ENCODE measurements at regions of chr9 and their contacts with region 1.

Region 1: DNA sequence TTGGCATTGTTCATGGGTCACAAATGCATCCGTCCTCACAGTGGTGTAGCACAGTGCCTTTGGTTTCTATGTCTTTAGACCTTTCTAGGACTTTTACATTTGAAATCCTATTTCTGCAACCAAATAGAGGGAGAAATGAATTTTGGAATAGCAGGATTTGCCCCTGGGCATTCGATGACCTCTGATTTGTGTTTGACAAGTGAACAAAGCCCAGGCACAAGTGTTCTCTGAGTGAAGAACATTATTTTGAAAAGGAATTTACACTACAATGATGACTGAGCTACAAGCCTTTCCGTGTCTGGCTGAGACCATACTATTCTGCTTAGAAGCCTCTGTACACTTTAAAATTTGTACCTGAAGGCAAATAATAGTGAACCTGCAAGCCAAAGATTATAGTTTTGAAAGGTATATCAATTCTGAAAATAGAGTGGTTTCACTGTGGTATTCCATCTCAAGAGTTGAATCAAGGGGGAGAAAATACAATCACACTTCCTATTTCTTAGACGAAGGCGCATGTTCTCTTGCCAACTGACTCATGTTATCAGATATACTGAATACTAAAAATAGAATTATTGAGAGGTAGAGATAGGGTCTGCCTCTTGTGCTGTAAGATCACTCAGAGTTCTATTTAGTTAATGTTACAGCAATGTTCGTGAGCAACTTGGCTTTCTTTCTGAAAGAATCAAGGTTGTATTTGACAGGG is 297.6 kb downstream of the KDM4C start:
- DNase-seq: no peak
- H3K4me3 Mint-ChIP-seq: no peak overlapping the region
- H3K27ac Mint-ChIP-seq: no peak overlapping the region
- H3K4me1 Mint-ChIP-seq: no peaks in the 10 kb centered on the region
- H3K27me3 Mint-ChIP-seq: no peaks in the 10 kb centered on the region

Region 2: GRCh38 chr9:6827439-6827838 is 227.9 kb before region 1 on chr9:
- intact Hi-C with region 1: loop called (anchors 1 kb)
- DNase-seq: peak; percentile 27
- H3K4me3 Mint-ChIP-seq: no peak overlapping the region
- H3K27ac Mint-ChIP-seq: peak overlapping the region; percentile 57
- H3K4me1 Mint-ChIP-seq: peaks cover 10% of the 10 kb centered on the region
- H3K27me3 Mint-ChIP-seq: no peaks in the 10 kb centered on the region

Region 3: DNA sequence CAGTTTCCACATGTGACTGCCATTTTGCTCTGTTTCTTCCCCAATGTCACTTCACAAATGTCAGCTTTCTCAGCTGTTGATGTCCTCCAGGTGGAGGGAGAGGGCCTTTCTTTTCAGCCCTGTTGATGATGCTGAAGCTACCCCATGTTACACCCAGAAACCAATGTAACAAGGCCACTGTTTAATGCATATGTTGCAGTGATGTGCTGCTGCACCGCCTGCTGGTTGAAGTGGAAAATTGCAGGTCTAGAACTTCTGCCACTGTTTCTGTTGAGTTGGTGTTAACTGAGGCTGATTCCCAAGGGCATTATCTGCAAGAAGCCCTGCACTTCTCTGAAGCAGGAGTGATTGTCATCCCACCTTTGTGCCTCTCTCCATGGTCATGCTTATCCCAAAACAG is 130.8 kb after region 1 on chr9:
- intact Hi-C with region 1: loop called (anchors 1 kb)
- DNase-seq: no peak
- H3K4me3 Mint-ChIP-seq: no peak overlapping the region
- H3K27ac Mint-ChIP-seq: no peak overlapping the region
- H3K4me1 Mint-ChIP-seq: no peaks in the 10 kb centered on the region
- H3K27me3 Mint-ChIP-seq: no peaks in the 10 kb centered on the region

Region 4: DNA sequence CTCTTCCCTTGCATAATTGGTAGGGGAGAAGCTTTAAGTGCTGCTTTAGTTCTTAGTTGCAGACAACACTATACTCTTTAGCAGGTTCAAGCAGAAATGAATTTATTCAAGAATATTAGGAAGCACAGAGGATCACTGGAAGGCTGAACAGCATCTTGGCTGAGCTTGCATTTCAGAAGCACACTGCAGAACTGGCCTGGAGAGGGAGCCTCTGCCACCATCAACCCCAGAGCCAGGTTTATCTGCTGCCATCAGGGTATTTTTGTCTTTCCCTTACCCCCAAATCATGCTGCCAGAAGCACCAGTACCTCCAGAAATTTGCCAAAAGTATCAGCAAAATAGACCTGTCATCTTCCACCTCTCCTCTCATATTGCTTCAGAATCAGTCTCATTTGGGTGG is 303.5 kb after region 1 on chr9:
- intact Hi-C with region 1: loop called (anchors 10 kb)
- DNase-seq: no peak
- H3K4me3 Mint-ChIP-seq: no peak overlapping the region
- H3K27ac Mint-ChIP-seq: no peak overlapping the region
- H3K4me1 Mint-ChIP-seq: no peaks in the 10 kb centered on the region
- H3K27me3 Mint-ChIP-seq: peaks cover 5% of the 10 kb centered on the region

Measured in activated T-helper 1 cell treated with anti-CD3 and anti-CD28 coated beads, Interleukin-12 subunit alpha, Interleukin-12 subunit beta, Interleukin-2, Interleukin-4 antibody, amounts not matched to agents 30 ng/mL and 10 ng/mL and 1 ng/mL, durations not matched to agents 14 hours and 24 hours and 36 hours (primary cell).